Transverse colon (tissue), 4 donors: ENCODE measurements at regions of chr19 and their contacts with region 1.

Region 1: DNA sequence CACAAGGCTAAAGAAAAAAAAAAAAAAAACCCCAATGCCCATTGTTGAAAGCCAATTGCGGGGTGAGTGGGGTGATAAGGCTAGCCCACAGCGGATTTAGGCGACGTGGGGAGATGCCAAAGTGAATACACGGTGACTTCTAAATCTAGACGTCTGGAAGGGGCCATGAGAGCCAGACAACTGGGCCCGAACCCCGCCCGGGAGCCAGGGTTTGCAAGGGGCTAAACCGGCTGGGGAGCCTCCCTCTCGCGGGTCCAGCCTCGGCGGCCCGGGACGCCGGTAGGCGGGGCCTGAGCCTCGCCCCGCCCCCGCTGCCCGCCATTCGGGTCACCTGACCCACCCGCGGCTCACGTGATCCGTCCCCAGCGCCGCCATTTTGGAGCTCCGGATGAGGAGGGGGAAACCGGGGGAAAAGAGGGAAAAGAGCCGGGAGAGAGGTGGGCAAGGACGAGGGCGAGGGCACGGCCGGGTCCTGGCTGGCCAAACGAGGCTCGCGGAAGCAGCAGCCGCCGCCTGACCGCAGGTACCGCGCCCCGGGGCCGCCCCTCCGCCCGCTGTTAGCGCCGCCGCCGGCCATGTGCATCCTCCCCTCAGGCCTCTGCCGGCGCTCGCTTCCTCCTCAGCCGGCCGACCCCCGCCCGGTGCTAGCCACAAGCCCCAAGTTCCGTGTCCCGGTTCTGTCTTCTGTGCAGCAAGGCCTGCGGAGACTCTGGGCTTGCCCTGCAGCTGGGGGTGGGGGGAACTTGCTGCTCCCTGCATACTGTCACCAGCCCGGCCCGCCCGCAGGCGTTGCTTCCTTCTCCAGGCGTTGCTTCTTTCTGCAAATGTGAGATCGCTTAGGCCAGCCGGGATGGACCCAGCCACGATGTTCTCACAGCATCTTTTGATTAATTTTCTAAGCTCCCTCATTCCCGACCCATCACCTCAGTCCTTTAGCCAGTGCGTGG is at the start of gene ZNF507:
- DNase-seq: peak; percentile 85
- H3K4me3 ChIP-seq: peak within 1 kb of the TSS; percentile 74 to 92 (median 90)
- H3K27ac ChIP-seq: peak within 1 kb of the TSS; percentile 86 to 90 (median 86)
- H3K4me1 ChIP-seq: peaks cover 0 to 43% (median 27%) of the 10 kb centered on the region in 4 donors
- H3K27me3 ChIP-seq: peaks cover 6% of the 10 kb centered on the region
- CTCF ChIP-seq: no peak
- EP300 ChIP-seq: no peak
- POLR2A ChIP-seq: no peak
- total RNA-seq, gene ZNF507: 20.3 to 30.0 (median 22.5) TPM

Region 2: GRCh38 chr19:32405431-32406161 is 60.1 kb after region 1 on chr19 and contains the start of gene DPY19L3:
- in situ Hi-C with region 1: loop called in 1 of 4 experiments (anchors 10 kb)
- intact Hi-C with region 1: loop called (anchors 5 kb)
- DNase-seq: peak; percentile 96
- H3K4me3 ChIP-seq: peak within 1 kb of the TSS; percentile 94 to 98 (median 96)
- H3K27ac ChIP-seq: peak within 1 kb of the TSS; percentile 97 to 99 (median 98)
- H3K4me1 ChIP-seq: peaks cover 10 to 19% (median 15%) of the 10 kb centered on the region in 4 donors
- H3K27me3 ChIP-seq: no peaks in the 10 kb centered on the region
- CTCF ChIP-seq: no peak
- EP300 ChIP-seq: no peak
- POLR2A ChIP-seq: peak; percentile 94
- total RNA-seq, gene DPY19L3: 15.6 to 48.6 (median 20.2) TPM

Region 3: GRCh38 chr19:32580901-32581703 is 235.6 kb after region 1 on chr19 and contains the start of gene PDCD5:
- in situ Hi-C with region 1: no loop called
- intact Hi-C with region 1: no loop called
- DNase-seq: peak; percentile 97
- H3K4me3 ChIP-seq: peak within 1 kb of the TSS; percentile 82 to 95 (median 88)
- H3K27ac ChIP-seq: peak within 1 kb of the TSS; percentile 89 to 95 (median 92)
- H3K4me1 ChIP-seq: peaks cover 0 to 13% (median 10%) of the 10 kb centered on the region in 4 donors
- H3K27me3 ChIP-seq: no peaks in the 10 kb centered on the region
- CTCF ChIP-seq: no peak
- EP300 ChIP-seq: no peak
- POLR2A ChIP-seq: peak; percentile 55
- total RNA-seq, gene PDCD5: 76.7 to 175 (median 106) TPM